IMR-90 (cell line): ENCODE measurements at regions of chr2 and their contacts with region 1.

Region 1: DNA sequence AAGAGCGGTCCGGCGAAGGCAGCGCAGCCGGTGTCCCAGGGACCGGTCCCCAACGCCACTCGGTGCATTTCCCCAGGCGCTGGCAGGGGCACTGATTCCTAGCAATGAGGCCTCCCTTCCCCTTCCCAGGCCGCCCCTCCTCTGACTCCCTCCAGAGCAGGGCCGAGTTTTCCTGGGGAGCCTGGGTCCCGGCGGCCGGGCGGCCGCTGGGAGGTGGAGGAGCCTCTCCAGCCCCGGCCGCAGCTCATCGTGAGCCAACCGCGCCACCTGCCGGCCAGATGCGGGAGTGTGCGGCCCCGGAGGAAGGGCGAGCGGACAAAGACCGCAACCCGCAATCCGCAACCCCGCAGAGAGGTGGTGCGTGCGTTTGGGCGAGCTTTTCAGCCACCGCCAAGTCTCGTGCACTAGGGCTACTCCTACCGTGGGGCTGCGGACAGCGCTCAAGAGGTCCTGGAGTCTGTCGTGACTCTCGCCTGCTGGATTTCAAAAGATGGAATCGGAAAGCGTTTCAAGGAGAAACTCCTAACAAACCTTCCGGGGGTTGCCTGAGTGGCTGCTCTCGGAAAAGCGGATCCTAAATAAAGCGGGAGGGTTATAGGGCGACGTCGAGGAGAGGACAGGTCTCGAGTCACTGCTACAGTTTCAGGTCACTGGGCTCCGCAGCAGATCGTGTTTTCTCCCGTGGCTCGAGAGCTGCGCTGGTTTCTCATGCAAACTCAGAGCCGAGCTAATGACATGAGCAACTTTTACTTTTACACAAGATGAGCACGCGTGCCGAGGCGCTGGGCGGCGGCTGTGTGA is 1.5 kb upstream of the EPHA4 start:
- DNase-seq: peak; percentile 67
- ATAC-seq: peak; percentile 71
- H3K4me3 ChIP-seq: peak overlapping the region; percentile 91
- H3K27ac ChIP-seq: peak overlapping the region; percentile 85
- H3K4me1 ChIP-seq: peaks cover 3% of the 10 kb centered on the region
- H3K27me3 ChIP-seq: no peaks in the 10 kb centered on the region
- CTCF ChIP-seq: peak; percentile 95
- POLR2A ChIP-seq: no peak
- RAD21 ChIP-seq: peak; percentile 96

Region 2: DNA sequence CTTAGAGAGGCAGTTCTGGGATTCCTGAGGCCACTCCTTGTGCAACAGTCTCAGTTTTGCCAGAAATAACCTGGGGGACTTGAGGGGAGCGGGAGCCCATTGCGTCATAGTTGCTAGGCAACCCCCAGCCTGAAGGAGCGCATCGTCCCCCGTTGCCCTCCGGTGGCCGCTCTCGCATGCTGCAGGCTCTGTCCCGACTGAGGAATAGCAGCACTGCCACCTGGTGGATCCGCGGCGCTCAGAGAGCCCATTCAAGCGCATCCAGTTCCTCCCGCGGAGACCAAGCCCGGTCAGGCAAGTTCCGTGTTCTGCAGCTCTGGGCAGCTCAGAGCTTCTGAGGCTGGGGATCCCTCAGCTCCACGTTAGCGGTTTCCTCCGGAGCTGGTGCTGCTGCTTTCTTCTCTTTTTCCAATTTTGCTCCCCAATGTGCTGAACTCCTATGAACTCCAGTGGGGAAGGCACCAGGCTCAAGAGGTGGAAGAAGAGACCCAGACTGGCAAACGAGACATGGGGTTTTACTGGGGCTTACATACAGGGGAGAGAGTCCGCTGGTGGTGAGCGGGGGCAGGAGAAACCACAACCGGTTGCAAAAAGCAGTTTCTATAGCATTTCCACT is 1931.1 kb before region 1 on chr2:
- CTCF ChIA-PET with region 1: no interaction called
- POLR2A ChIA-PET with region 1: no interaction called
- dilution Hi-C with region 1: no loop called
- in situ Hi-C with region 1: no loop called
- intact Hi-C with region 1: loop called (anchors 5 kb)
- DNase-seq: peak; percentile 94
- ATAC-seq: peak; percentile 97
- H3K4me3 ChIP-seq: no peak overlapping the region
- H3K27ac ChIP-seq: no peak overlapping the region
- H3K4me1 ChIP-seq: peaks cover 12% of the 10 kb centered on the region
- H3K27me3 ChIP-seq: no peaks in the 10 kb centered on the region
- CTCF ChIP-seq: peak; percentile 100; the same call in 1 of the 2 replicates
- POLR2A ChIP-seq: 0 out of 2 replicates have a peak, but pooled peaks have one; percentile 22
- RAD21 ChIP-seq: peak; percentile 96

Region 3: GRCh38 chr2:220104871-220105351 is 1468.7 kb before region 1 on chr2:
- CTCF ChIA-PET with region 1: interaction called, 9 read pairs
- POLR2A ChIA-PET with region 1: no interaction called
- dilution Hi-C with region 1: no loop called
- in situ Hi-C with region 1: loop called (anchors 10 kb)
- intact Hi-C with region 1: loop called (anchors 1 kb)
- DNase-seq: peak; percentile 91
- ATAC-seq: peak; percentile 100
- H3K4me3 ChIP-seq: no peak overlapping the region
- H3K27ac ChIP-seq: no peak overlapping the region
- H3K4me1 ChIP-seq: peaks cover 3% of the 10 kb centered on the region
- H3K27me3 ChIP-seq: no peaks in the 10 kb centered on the region
- CTCF ChIP-seq: peak; percentile 90
- POLR2A ChIP-seq: peak; percentile 63; the same call in 1 of the 2 replicates
- RAD21 ChIP-seq: peak; percentile 98

Region 4: DNA sequence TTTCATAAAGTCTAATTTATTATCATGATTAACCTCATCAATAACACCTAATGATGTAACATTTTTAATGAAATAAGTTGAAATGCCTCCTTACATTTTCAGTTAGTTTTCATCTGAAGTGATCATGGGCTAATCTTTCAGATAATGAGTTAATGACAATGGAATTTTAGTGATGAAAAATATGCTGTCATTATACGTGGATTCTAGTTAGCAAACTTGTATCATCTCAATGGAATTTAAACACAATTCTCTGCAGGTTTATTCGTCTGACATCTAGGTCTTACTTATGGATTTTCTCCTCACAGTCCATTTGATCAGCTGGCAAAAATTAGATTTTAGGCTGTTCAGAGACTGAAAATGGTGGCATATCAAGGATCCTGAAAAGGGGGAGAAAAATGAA is 1061.2 kb before region 1 on chr2:
- CTCF ChIA-PET with region 1: interaction called, 3 read pairs
- POLR2A ChIA-PET with region 1: no interaction called
- dilution Hi-C with region 1: no loop called
- in situ Hi-C with region 1: no loop called
- intact Hi-C with region 1: loop called (anchors 1 kb)
- DNase-seq: peak; percentile 79
- ATAC-seq: peak; percentile 60
- H3K4me3 ChIP-seq: no peak overlapping the region
- H3K27ac ChIP-seq: peak overlapping the region; percentile 100
- H3K4me1 ChIP-seq: peaks cover 19% of the 10 kb centered on the region
- H3K27me3 ChIP-seq: no peaks in the 10 kb centered on the region
- CTCF ChIP-seq: no peak
- POLR2A ChIP-seq: no peak
- RAD21 ChIP-seq: no peak

Region 5: GRCh38 chr2:220779931-220780330 is 793.7 kb before region 1 on chr2:
- CTCF ChIA-PET with region 1: no interaction called
- POLR2A ChIA-PET with region 1: no interaction called
- dilution Hi-C with region 1: no loop called
- in situ Hi-C with region 1: no loop called
- intact Hi-C with region 1: loop called (anchors 5 kb)
- DNase-seq: peak; percentile 92
- ATAC-seq: peak; percentile 65
- H3K4me3 ChIP-seq: no peak overlapping the region
- H3K27ac ChIP-seq: peak overlapping the region; percentile 82; the same call in 1 of the 2 replicates
- H3K4me1 ChIP-seq: peaks cover 16% of the 10 kb centered on the region
- H3K27me3 ChIP-seq: no peaks in the 10 kb centered on the region
- CTCF ChIP-seq: no peak
- POLR2A ChIP-seq: no peak
- RAD21 ChIP-seq: no peak

Region 6: DNA sequence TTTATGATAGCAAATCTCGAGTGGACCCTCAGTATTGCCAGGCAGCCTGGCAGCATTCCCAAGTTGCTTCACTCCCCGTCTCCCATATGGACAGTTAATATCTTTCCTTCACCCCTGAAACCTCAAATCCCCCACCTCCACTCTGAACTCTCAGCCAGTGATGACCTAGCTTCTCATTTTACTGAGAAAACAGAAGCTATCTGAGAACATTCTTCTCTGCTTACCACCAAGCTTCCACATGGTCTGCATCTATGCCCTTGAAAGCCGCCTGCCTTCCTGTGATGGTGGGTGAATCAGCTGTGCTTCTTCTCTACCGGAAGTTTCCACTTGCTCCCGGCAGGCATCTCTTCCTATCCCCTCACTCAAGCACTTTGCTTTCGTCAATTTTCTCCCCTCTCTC is 530.7 kb before region 1 on chr2:
- CTCF ChIA-PET with region 1: no interaction called
- POLR2A ChIA-PET with region 1: no interaction called
- dilution Hi-C with region 1: no loop called
- in situ Hi-C with region 1: no loop called
- intact Hi-C with region 1: loop called (anchors 5 kb)
- DNase-seq: peak; percentile 60
- ATAC-seq: peak; percentile 61
- H3K4me3 ChIP-seq: no peak overlapping the region
- H3K27ac ChIP-seq: no peak overlapping the region
- H3K4me1 ChIP-seq: no peaks in the 10 kb centered on the region
- H3K27me3 ChIP-seq: peaks cover 2% of the 10 kb centered on the region
- CTCF ChIP-seq: no peak
- POLR2A ChIP-seq: no peak
- RAD21 ChIP-seq: no peak

Region 7: GRCh38 chr2:221322741-221323140 is 250.9 kb before region 1 on chr2:
- CTCF ChIA-PET with region 1: no interaction called
- POLR2A ChIA-PET with region 1: no interaction called
- dilution Hi-C with region 1: no loop called
- in situ Hi-C with region 1: no loop called
- intact Hi-C with region 1: no loop called
- DNase-seq: no peak
- ATAC-seq: no peak
- H3K4me3 ChIP-seq: no peak overlapping the region
- H3K27ac ChIP-seq: no peak overlapping the region
- H3K4me1 ChIP-seq: no peaks in the 10 kb centered on the region
- H3K27me3 ChIP-seq: peaks cover 6% of the 10 kb centered on the region; the same call in 1 of the 2 replicates
- CTCF ChIP-seq: no peak
- POLR2A ChIP-seq: no peak
- RAD21 ChIP-seq: no peak

Region 8: GRCh38 chr2:221402072-221402471 is 171.6 kb before region 1 on chr2:
- CTCF ChIA-PET with region 1: no interaction called
- POLR2A ChIA-PET with region 1: no interaction called
- dilution Hi-C with region 1: no loop called
- in situ Hi-C with region 1: no loop called
- intact Hi-C with region 1: no loop called
- DNase-seq: peak; percentile 80
- ATAC-seq: peak; percentile 98
- H3K4me3 ChIP-seq: no peak overlapping the region
- H3K27ac ChIP-seq: no peak overlapping the region
- H3K4me1 ChIP-seq: peaks cover 5% of the 10 kb centered on the region
- H3K27me3 ChIP-seq: no peaks in the 10 kb centered on the region
- CTCF ChIP-seq: no peak
- POLR2A ChIP-seq: no peak
- RAD21 ChIP-seq: no peak

Region 9: GRCh38 chr2:221444106-221444505 is 129.5 kb before region 1 on chr2:
- CTCF ChIA-PET with region 1: no interaction called
- POLR2A ChIA-PET with region 1: no interaction called
- dilution Hi-C with region 1: no loop called
- in situ Hi-C with region 1: no loop called
- intact Hi-C with region 1: loop called (anchors 5 kb)
- DNase-seq: peak; percentile 85
- ATAC-seq: peak; percentile 87
- H3K4me3 ChIP-seq: no peak overlapping the region
- H3K27ac ChIP-seq: no peak overlapping the region
- H3K4me1 ChIP-seq: peaks cover 2% of the 10 kb centered on the region
- H3K27me3 ChIP-seq: no peaks in the 10 kb centered on the region
- CTCF ChIP-seq: no peak
- POLR2A ChIP-seq: no peak
- RAD21 ChIP-seq: peak; percentile 17; the same call in 1 of the 2 replicates